Kidney (tissue), 22 donors: ENCODE measurements at regions of chrX and their contacts with region 1.

Region 1: DNA sequence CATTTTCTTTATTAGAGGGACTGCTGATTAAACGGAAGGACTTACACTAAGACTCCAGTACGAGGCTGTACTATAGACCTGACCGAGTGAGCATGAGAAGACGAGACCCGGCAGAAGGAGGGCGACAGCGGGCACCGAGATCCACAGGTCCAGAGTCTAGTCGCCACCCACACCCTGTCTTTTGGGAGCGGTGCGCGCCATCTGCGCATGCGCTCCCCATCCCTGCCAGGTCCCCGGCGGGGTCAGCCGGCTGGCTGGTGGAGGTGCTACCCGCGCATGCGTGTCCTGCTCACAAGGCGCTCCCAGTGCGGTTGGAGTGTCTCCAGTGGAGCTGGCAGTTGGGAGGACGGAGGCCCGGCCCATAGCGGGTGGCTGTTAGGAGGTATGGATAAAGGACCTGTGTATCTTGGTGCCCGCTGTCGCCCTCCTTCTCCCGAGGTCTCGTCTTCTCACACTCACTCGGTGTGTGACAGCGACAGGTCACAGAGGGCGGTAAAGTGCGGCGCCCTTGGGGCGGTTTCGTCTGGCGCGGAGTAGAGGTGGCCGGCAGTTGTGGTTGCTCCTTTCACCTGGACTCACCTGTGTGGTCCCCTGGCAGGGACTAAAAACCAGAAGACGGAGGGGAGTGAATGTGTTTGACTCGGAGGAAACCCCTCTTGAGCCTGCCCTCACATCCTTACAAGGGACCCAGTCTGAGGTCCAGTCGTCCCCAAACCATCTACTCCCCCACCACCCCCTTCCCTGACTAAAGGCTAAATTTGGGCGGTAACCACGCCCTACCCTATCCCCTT is 7.6 kb upstream of the HSD17B10 start:
- DNase-seq: peak; percentile 72 to 90 (median 81)
- H3K4me3 ChIP-seq: peak overlapping the region; percentile 50 to 72 (median 56)
- H3K27ac ChIP-seq: no peak overlapping the region
- H3K4me1 ChIP-seq: peaks cover 0 to 4% (median 0%) of the 10 kb centered on the region in 3 donors
- H3K27me3 ChIP-seq: peaks cover 18% of the 10 kb centered on the region
- CTCF ChIP-seq: no peak

Region 2: GRCh38 chrX:53321230-53321942 is 120.3 kb before region 1 on chrX:
- intact Hi-C with region 1: loop called (anchors 10 kb)
- DNase-seq: no peak
- H3K4me3 ChIP-seq: peak overlapping the region in 2 of 3 donors; percentile 42 to 66
- H3K27ac ChIP-seq: no peak overlapping the region
- H3K4me1 ChIP-seq: peaks cover 0 to 8% (median 0%) of the 10 kb centered on the region in 3 donors
- H3K27me3 ChIP-seq: peaks cover 47% of the 10 kb centered on the region
- CTCF ChIP-seq: no peak